Prostate gland (tissue), 2 donors: ENCODE measurements at regions of chr21 and their contacts with region 1.

Region 1: GRCh38 chr21:35051287-35051818 is 2.3 kb upstream of the RUNX1 start:
- DNase-seq: peak; percentile 20
- H3K4me3 ChIP-seq: no peak overlapping the region
- H3K27ac ChIP-seq: no peak overlapping the region
- H3K4me1 ChIP-seq: peaks cover 3% of the 10 kb centered on the region
- H3K27me3 ChIP-seq: no peaks in the 10 kb centered on the region
- CTCF ChIP-seq: peak in 2 of 4 experiments; percentile 26 to 27
- POLR2A ChIP-seq: no peak

Region 2: DNA sequence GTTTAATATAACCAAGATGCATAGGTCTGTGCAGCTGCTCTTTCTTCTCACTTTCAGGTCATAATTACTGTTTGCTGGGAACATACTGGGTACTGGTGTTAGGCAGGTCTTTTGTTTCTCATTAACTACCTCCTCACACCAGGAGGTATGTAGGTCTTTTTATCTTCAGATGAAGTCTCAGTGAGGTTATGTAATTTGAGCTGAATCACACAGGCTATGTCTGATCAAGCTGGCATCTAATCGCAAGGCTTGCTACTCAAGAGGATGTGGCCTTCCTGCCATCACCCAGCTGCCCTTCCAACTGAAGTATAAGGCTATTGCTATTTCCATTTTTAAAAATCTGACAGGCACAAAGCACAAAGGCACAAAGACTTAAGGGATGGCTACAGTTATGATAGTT is 98.7 kb before region 1 on chr21:
- intact Hi-C with region 1: no loop called
- DNase-seq: no peak
- H3K4me3 ChIP-seq: no peak overlapping the region
- H3K27ac ChIP-seq: no peak overlapping the region
- H3K4me1 ChIP-seq: peaks cover under 1% of the 10 kb centered on the region
- H3K27me3 ChIP-seq: no peaks in the 10 kb centered on the region
- CTCF ChIP-seq: no peak
- POLR2A ChIP-seq: no peak

Region 3: GRCh38 chr21:35179990-35180540 is 128.7 kb after region 1 on chr21:
- intact Hi-C with region 1: no loop called
- DNase-seq: no peak
- H3K4me3 ChIP-seq: no peak overlapping the region
- H3K27ac ChIP-seq: no peak overlapping the region
- H3K4me1 ChIP-seq: no peaks in the 10 kb centered on the region
- H3K27me3 ChIP-seq: no peaks in the 10 kb centered on the region
- CTCF ChIP-seq: no peak
- POLR2A ChIP-seq: no peak

Region 4: GRCh38 chr21:35324372-35325220 is 273.2 kb after region 1 on chr21:
- intact Hi-C with region 1: loop called (anchors 10 kb)
- DNase-seq: peak; percentile 28
- H3K4me3 ChIP-seq: no peak overlapping the region
- H3K27ac ChIP-seq: peak overlapping the region; percentile 51 to 74
- H3K4me1 ChIP-seq: peaks cover 18% of the 10 kb centered on the region
- H3K27me3 ChIP-seq: no peaks in the 10 kb centered on the region
- CTCF ChIP-seq: no peak
- POLR2A ChIP-seq: no peak

Region 5: DNA sequence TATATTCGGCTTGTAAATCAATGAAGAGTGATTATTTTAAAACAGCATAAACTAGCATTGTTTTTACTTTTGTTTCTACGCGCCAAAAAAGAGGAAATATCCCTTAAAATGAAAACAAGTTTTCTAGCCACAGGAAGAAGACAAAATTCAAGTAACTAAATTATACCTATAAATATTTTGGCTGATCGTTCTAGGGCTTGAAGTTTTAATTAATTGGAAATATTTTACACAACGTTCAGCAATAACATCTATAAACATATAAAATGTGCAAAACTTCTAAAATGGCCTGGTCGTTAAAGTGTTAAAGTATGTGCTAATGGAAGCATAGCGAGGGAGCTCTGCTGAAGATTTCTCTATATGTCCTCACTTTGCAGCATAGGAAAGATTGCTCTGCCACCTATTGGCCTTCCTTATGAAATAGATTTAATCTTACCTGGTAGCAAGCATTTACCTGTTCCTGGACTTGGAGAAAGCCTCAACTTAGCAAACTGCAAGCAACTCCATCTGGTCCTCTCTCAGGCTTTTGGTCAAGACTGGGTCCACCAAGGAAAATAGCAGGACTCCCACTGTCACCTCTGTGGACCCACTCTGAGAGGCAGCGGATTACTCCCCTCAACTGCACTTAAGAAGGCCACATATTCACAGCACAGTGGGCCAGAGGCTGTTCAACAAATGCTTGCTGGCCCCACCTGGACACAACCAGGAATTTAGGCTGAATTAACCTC is 349.0 kb after region 1 on chr21:
- intact Hi-C with region 1: loop called (anchors 10 kb)
- DNase-seq: peak; percentile 57
- H3K4me3 ChIP-seq: no peak overlapping the region
- H3K27ac ChIP-seq: no peak overlapping the region
- H3K4me1 ChIP-seq: no peaks in the 10 kb centered on the region
- H3K27me3 ChIP-seq: no peaks in the 10 kb centered on the region
- CTCF ChIP-seq: peak; percentile 34 to 78 (median 63)
- POLR2A ChIP-seq: no peak